Adrenal gland (tissue), 19 donors: ENCODE measurements at regions of chr4 and their contacts with region 1.

Region 1: GRCh38 chr4:37561803-37562207 is 124.4 kb downstream of the RELL1 start:
- DNase-seq: no peak
- H3K4me3 ChIP-seq: no peak overlapping the region
- H3K27ac ChIP-seq: no peak overlapping the region
- H3K4me1 ChIP-seq: no peaks in the 10 kb centered on the region
- H3K27me3 ChIP-seq: no peaks in the 10 kb centered on the region
- CTCF ChIP-seq: no peak
- POLR2A ChIP-seq: no peak

Region 2: GRCh38 chr4:37188100-37188499 is 373.7 kb before region 1 on chr4:
- intact Hi-C with region 1: no loop called
- DNase-seq: no peak
- H3K4me3 ChIP-seq: no peak overlapping the region
- H3K27ac ChIP-seq: no peak overlapping the region
- H3K4me1 ChIP-seq: no peaks in the 10 kb centered on the region
- H3K27me3 ChIP-seq: no peaks in the 10 kb centered on the region
- CTCF ChIP-seq: no peak
- POLR2A ChIP-seq: no peak

Region 3: DNA sequence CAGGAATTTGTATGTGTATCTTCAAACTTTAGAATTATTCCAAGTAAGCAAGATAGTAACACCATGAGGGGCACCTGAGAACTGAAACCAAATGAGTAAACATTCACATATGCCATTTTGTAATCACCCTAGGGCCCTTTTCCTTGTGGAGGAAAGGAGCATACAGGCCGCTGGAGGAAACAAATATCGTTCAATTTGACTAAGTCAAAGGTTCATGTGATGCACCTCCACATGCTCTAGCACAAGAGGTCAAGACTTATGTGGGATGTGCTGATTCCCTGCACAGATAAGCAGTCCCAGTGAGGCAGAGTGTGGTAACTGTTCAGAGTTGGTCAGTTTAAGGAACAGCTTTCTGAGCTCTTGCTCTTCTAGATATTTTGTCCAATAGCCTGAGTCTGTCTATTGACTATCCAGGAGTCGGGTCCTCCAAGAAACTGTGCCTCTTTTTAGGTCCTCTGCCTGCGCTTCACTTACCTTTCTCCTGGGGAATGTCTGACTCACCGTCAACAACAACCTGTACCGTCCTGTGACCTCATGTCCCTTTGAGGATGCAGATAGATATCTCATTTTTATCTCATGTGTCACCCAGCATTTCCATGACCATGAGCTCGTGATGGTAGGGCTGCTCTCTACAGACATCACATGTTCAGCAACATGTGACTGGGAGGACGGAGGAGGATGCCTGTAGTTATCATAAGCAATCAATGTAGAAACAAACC is 120.4 kb before region 1 on chr4:
- intact Hi-C with region 1: loop called in 1 of 2 experiments (anchors 10 kb)
- DNase-seq: no peak
- H3K4me3 ChIP-seq: no peak overlapping the region
- H3K27ac ChIP-seq: no peak overlapping the region
- H3K4me1 ChIP-seq: no peaks in the 10 kb centered on the region
- H3K27me3 ChIP-seq: no peaks in the 10 kb centered on the region
- CTCF ChIP-seq: no peak
- POLR2A ChIP-seq: no peak

Region 4: GRCh38 chr4:37452952-37453280 is 108.9 kb before region 1 on chr4:
- intact Hi-C with region 1: loop called (anchors 10 kb)
- DNase-seq: peak in 6 of 7 donors; percentile 22 to 71 (median 40)
- H3K4me3 ChIP-seq: peak overlapping the region in 1 of 4 donors; percentile 51
- H3K27ac ChIP-seq: no peak overlapping the region
- H3K4me1 ChIP-seq: peaks cover 6 to 14% of the 10 kb centered on the region in 2 donors
- H3K27me3 ChIP-seq: peaks cover 40% of the 10 kb centered on the region
- CTCF ChIP-seq: peak in 5 of 6 experiments; percentile 38 to 43 (median 40)
- POLR2A ChIP-seq: no peak

Region 5: GRCh38 chr4:37946503-37947179 is 384.8 kb after region 1 on chr4:
- intact Hi-C with region 1: no loop called
- DNase-seq: peak; percentile 26 to 57 (median 38)
- H3K4me3 ChIP-seq: no peak overlapping the region
- H3K27ac ChIP-seq: peak overlapping the region in 1 of 5 donors; percentile 5
- H3K4me1 ChIP-seq: peaks cover 10 to 13% of the 10 kb centered on the region in 2 donors
- H3K27me3 ChIP-seq: no peaks in the 10 kb centered on the region
- CTCF ChIP-seq: no peak
- POLR2A ChIP-seq: no peak